Adrenal gland (tissue), 19 donors: ENCODE measurements at regions of chr1 and their contacts with region 1.

Region 1: GRCh38 chr1:154574716-154575115 is 7.1 kb downstream of the CHRNB2 start:
- DNase-seq: no peak
- H3K4me3 ChIP-seq: no peak overlapping the region
- H3K27ac ChIP-seq: no peak overlapping the region
- H3K4me1 ChIP-seq: peaks cover 0 to 4% of the 10 kb centered on the region in 2 donors
- H3K27me3 ChIP-seq: no peaks in the 10 kb centered on the region
- CTCF ChIP-seq: no peak
- POLR2A ChIP-seq: no peak

Region 2: GRCh38 chr1:154335025-154335714 is 239.5 kb before region 1 on chr1:
- intact Hi-C with region 1: no loop called
- DNase-seq: peak; percentile 73 to 95 (median 90)
- H3K4me3 ChIP-seq: no peak overlapping the region
- H3K27ac ChIP-seq: peak overlapping the region in 2 of 5 donors; percentile 18 to 42
- H3K4me1 ChIP-seq: peaks cover 4 to 10% of the 10 kb centered on the region in 2 donors
- H3K27me3 ChIP-seq: no peaks in the 10 kb centered on the region
- CTCF ChIP-seq: peak; percentile 81 to 87 (median 86)
- POLR2A ChIP-seq: no peak

Region 3: GRCh38 chr1:154755858-154756730 is 181.4 kb after region 1 on chr1:
- intact Hi-C with region 1: loop called in 1 of 2 experiments (anchors 5 kb)
- DNase-seq: peak in 1 of 7 donors; percentile 17
- H3K4me3 ChIP-seq: no peak overlapping the region
- H3K27ac ChIP-seq: no peak overlapping the region
- H3K4me1 ChIP-seq: peaks cover 5 to 7% of the 10 kb centered on the region in 2 donors
- H3K27me3 ChIP-seq: peaks cover 17% of the 10 kb centered on the region
- CTCF ChIP-seq: no peak
- POLR2A ChIP-seq: no peak

Region 4: GRCh38 chr1:154870115-154870571 is 295.4 kb after region 1 on chr1 and contains the start of gene KCNN3:
- intact Hi-C with region 1: loop called in 1 of 2 experiments (anchors 5 kb)
- DNase-seq: peak; percentile 90 to 97 (median 93)
- H3K4me3 ChIP-seq: peak within 1 kb of the TSS in 1 of 4 donors; percentile 43
- H3K27ac ChIP-seq: peak within 1 kb of the TSS in 1 of 5 donors; percentile 26
- H3K4me1 ChIP-seq: peaks cover 0 to 11% of the 10 kb centered on the region in 2 donors
- H3K27me3 ChIP-seq: no peaks in the 10 kb centered on the region
- CTCF ChIP-seq: no peak
- POLR2A ChIP-seq: peak; percentile 56 to 67
- total RNA-seq, gene KCNN3: 0.17 to 2.3 (median 1.1) TPM